Activated T-helper 1 cell treated with anti-CD3 and anti-CD28 coated beads, Interleukin-12 subunit alpha, Interleukin-12 subunit beta, Interleukin-2, Interleukin-4 antibody, amounts not matched to agents 30 ng/mL and 10 ng/mL and 1 ng/mL, durations not matched to agents 14 hours and 24 hours and 36 hours (primary cell): ENCODE measurements at regions of chr11 and their contacts with region 1.

Region 1: DNA sequence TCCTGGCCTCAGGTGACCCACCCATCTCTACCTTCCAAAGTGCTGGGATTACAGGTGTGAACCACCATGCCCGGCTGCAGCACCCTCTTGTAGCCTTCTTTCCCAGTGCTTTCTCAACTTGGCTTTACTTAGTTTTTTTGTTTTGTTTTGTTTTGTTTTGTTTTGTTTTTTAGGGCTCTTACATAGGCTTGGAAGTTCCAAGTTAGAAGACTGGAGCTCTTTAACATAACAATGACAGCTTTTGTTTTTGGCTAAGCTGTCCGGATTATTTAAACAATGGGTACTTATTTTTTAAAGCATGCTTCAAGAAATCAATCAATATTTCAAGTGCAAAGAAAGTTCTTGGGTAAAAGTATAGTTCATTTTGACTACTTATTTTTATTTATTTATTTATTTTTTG is 25.9 kb downstream of the KMT2A start:
- DNase-seq: no peak
- H3K4me3 Mint-ChIP-seq: no peak overlapping the region
- H3K27ac Mint-ChIP-seq: no peak overlapping the region
- H3K4me1 Mint-ChIP-seq: peaks cover 20% of the 10 kb centered on the region
- H3K27me3 Mint-ChIP-seq: no peaks in the 10 kb centered on the region

Region 2: DNA sequence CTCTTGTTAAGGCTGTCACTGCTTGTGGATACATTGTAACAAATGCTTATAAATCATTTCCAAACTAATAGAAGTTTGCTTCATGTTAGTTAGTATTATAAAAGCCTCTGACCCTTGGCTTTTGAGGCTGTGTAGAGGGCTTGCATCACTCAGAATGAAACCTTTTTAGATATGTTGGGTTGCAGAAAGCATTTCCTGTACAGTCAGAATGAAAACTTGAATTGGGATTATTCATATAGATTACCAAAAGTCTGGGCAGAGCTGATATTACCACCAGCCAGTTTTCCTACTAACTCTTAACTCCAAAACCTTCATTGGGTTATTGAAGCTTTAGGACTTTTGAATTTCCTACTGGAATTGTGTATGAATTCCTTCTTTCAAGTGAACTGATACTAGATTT is 13.9 kb before region 1 on chr11:
- intact Hi-C with region 1: loop called (anchors 2 kb)
- DNase-seq: no peak
- H3K4me3 Mint-ChIP-seq: peak overlapping the region; percentile 6
- H3K27ac Mint-ChIP-seq: peak overlapping the region; percentile 22
- H3K4me1 Mint-ChIP-seq: peaks cover 73% of the 10 kb centered on the region
- H3K27me3 Mint-ChIP-seq: no peaks in the 10 kb centered on the region

Region 3: DNA sequence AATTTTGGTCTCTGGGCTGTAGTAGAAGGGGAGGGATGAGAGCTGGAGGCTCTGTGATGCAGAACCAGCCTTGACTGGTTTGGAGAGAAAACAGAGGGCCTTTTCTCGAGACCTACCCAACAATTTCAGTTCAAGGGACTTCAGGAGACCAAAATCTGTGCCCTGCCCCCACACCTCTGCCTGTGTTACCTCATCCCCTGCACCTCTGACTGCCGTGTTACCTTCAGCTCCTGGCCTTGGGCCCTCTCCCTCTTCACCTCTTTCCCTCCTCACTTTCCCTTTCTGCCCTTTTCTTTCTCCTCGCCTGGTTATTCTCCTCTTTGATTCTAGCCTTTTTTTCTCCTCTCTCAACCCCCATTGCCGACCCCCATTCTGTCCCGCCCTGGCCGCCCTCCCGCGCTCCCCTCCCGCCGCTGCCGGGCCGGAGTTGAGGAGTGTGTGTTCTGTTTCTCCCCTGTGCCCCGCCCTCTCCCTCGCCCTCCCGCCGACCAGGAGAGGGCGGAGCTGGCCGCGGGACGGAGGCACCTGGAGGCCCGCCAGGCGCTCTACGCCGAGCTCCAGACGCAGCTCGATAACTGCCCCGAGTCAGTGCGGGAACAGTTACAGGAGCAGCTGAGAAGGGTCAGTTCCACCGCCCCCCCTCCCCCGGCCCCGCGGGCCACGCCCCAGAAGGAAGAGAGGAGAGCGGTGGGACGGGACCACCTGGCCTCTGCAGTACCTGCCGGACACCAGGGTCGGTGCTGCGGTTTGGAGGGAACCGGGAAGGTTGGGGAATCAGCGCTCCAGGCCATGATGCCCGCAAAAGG is 172.5 kb after region 1 on chr11:
- intact Hi-C with region 1: no loop called
- DNase-seq: no peak
- H3K4me3 Mint-ChIP-seq: no peak overlapping the region
- H3K27ac Mint-ChIP-seq: no peak overlapping the region
- H3K4me1 Mint-ChIP-seq: no peaks in the 10 kb centered on the region
- H3K27me3 Mint-ChIP-seq: peaks cover 6% of the 10 kb centered on the region